Left ventricle myocardium inferior (tissue), 1 donor: ENCODE measurements at regions of chr10 and their contacts with region 1.

Region 1: GRCh38 chr10:30413996-30414576 is 19.9 kb upstream of the MAP3K8 start:
- DNase-seq: no peak
- H3K4me3 ChIP-seq: no peak overlapping the region
- H3K27ac ChIP-seq: no peak overlapping the region
- H3K4me1 ChIP-seq: peaks cover 8% of the 10 kb centered on the region
- H3K27me3 ChIP-seq: no peaks in the 10 kb centered on the region
- CTCF ChIP-seq: peak; percentile 86

Region 2: GRCh38 chr10:29702273-29703164 is 711.6 kb before region 1 on chr10:
- intact Hi-C with region 1: no loop called
- DNase-seq: no peak
- H3K4me3 ChIP-seq: no peak overlapping the region
- H3K27ac ChIP-seq: no peak overlapping the region
- H3K4me1 ChIP-seq: peaks cover 19% of the 10 kb centered on the region
- H3K27me3 ChIP-seq: no peaks in the 10 kb centered on the region
- CTCF ChIP-seq: no peak

Region 3: GRCh38 chr10:30534465-30535144 is 120.5 kb after region 1 on chr10:
- intact Hi-C with region 1: loop called (anchors 10 kb)
- DNase-seq: peak; percentile 26
- H3K4me3 ChIP-seq: no peak overlapping the region
- H3K27ac ChIP-seq: no peak overlapping the region
- H3K4me1 ChIP-seq: peaks cover 28% of the 10 kb centered on the region
- H3K27me3 ChIP-seq: no peaks in the 10 kb centered on the region
- CTCF ChIP-seq: peak; percentile 92